Tibial artery (tissue), 4 donors: ENCODE measurements at regions of chr1 and their contacts with region 1.

Region 1: GRCh38 chr1:57976216-57976615 is 552.4 kb upstream of the DAB1 start:
- DNase-seq: no peak
- H3K4me3 ChIP-seq: no peak overlapping the region
- H3K27ac ChIP-seq: no peak overlapping the region
- H3K4me1 ChIP-seq: no peaks in the 10 kb centered on the region
- H3K27me3 ChIP-seq: no peaks in the 10 kb centered on the region
- CTCF ChIP-seq: no peak

Region 2: DNA sequence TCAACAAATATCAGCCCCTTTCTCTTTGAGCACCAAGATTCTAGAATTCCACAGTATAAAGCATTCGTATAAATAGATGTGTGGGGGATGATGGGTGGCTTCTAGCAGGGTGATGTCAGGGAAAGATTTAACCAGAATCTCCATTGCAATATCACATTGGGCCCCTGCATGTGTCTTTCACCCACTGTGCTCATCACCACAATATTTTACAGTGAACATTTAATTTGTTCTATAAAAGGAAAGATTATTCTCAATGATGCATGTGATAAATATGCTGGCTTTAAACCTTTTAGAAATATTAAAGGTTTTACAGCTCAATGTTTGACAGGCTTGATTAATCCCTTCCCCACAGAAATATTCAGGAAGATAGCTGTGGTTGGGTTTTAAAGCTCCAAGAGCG is 94.6 kb before region 1 on chr1:
- intact Hi-C with region 1: no loop called
- DNase-seq: no peak
- H3K4me3 ChIP-seq: no peak overlapping the region
- H3K27ac ChIP-seq: no peak overlapping the region
- H3K4me1 ChIP-seq: no peaks in the 10 kb centered on the region
- H3K27me3 ChIP-seq: no peaks in the 10 kb centered on the region
- CTCF ChIP-seq: no peak

Region 3: DNA sequence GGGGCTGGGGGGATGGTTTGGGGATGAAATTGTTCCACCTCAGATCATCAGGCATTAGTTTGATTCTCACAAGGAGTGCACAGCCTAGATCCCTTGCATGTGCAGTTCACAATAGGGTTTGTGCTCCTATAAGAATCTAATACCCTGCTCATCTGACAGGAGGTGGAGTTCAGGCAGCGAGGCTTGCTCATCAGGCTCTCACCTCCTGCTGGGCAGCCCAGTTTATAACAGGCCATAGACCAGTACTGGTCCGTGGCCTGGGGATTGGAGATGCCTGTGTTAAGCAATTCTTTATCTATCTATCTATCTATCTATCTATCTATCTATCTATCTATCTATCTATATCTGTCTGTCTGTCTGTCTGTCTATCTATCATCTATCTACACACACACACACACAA is 27.0 kb before region 1 on chr1:
- intact Hi-C with region 1: loop called (anchors 1 kb)
- DNase-seq: no peak
- H3K4me3 ChIP-seq: no peak overlapping the region
- H3K27ac ChIP-seq: no peak overlapping the region
- H3K4me1 ChIP-seq: no peaks in the 10 kb centered on the region
- H3K27me3 ChIP-seq: no peaks in the 10 kb centered on the region
- CTCF ChIP-seq: no peak

Region 4: DNA sequence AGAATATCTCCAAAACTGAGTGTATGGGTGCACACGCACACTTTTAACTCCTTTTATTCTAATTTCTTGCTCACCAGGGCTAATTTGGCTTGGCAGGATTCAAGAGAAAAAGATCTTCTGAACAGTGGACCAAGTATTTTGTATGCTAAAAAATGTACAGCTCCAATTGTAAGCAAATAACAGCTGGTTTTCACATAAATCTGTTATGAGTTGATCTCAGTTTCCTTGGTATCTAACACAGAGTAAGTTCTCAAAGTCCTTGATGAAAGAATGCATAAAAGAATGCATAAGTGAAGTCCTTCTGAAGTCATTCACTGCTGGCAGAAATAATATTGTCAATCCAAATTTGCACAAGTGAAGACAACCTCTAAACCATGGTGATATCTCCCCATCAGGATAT is 357.3 kb after region 1 on chr1:
- intact Hi-C with region 1: no loop called
- DNase-seq: no peak
- H3K4me3 ChIP-seq: no peak overlapping the region
- H3K27ac ChIP-seq: no peak overlapping the region
- H3K4me1 ChIP-seq: no peaks in the 10 kb centered on the region
- H3K27me3 ChIP-seq: no peaks in the 10 kb centered on the region
- CTCF ChIP-seq: no peak